Gastrocnemius medialis (tissue), 4 donors: ENCODE measurements at regions of chr2 and their contacts with region 1.

Region 1: DNA sequence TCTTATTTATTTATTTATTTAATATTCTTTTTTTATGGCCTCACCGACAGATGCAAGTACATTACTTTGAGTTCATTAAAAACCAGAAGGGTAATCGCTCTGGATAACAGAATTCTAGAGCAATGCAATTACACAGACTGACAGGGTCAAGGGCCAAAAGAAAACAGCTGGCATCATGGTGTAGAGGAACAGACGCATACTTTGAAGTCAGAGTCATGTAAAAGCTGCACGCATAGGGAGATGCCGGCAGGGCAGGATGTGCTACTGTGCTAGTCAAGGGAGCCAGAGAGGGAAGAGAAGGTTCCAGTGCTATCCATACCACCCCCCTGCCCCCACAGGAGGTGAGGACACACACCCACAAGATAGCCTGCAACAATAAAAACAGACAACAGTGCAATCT is 115.2 kb upstream of the TFCP2L1 start:
- DNase-seq: no peak
- ATAC-seq: no peak
- H3K4me3 ChIP-seq: no peak overlapping the region
- H3K27ac ChIP-seq: no peak overlapping the region
- H3K4me1 ChIP-seq: no peaks in the 10 kb centered on the region
- H3K27me3 ChIP-seq: no peaks in the 10 kb centered on the region
- CTCF ChIP-seq: no peak
- POLR2A ChIP-seq: no peak

Region 2: GRCh38 chr2:121427187-121427689 is 27.0 kb after region 1 on chr2:
- in situ Hi-C with region 1: no loop called
- intact Hi-C with region 1: no loop called
- DNase-seq: no peak
- ATAC-seq: no peak
- H3K4me3 ChIP-seq: no peak overlapping the region
- H3K27ac ChIP-seq: no peak overlapping the region
- H3K4me1 ChIP-seq: no peaks in the 10 kb centered on the region
- H3K27me3 ChIP-seq: no peaks in the 10 kb centered on the region
- CTCF ChIP-seq: no peak
- POLR2A ChIP-seq: no peak

Region 3: DNA sequence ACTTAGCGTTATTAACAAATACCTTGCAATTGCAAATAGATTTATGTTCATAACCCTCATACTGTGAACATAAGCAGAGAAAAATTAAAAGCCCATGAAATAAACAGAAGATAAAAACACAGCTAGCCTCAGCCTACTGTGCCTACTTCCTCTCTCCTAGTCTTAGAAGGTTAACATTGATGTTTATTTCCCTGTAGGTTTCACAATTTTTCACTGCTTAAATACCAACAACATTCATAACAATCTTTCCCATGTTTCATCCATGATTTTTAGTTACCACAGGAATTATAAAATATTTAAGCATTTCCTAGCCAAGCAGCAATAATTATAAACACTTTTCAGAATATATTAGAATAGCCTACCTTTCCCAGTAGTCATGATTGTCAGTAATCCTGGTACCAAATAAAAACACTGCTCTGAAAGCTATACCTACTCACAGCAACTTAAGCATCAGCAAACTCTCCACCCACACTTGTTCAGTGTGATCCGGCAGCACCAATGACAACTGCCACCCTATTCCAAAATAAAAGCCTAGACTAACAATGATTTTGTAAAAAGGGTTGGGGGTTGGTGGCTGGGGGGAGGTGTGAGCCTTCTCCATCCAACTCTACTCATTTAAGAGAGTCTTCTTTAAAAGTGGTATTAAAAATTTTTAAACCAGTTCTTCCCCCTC is 89.8 kb after region 1 on chr2:
- in situ Hi-C with region 1: no loop called
- intact Hi-C with region 1: loop called (anchors 10 kb)
- DNase-seq: no peak
- ATAC-seq: no peak
- H3K4me3 ChIP-seq: no peak overlapping the region
- H3K27ac ChIP-seq: peak overlapping the region in 2 of 4 donors; percentile 29 to 32
- H3K4me1 ChIP-seq: peaks cover 76 to 86% of the 10 kb centered on the region in 2 donors
- H3K27me3 ChIP-seq: no peaks in the 10 kb centered on the region
- CTCF ChIP-seq: no peak
- POLR2A ChIP-seq: no peak

Region 4: GRCh38 chr2:121699421-121700333 is 299.5 kb after region 1 on chr2:
- in situ Hi-C with region 1: loop called in 1 of 4 experiments (anchors 25 kb)
- intact Hi-C with region 1: no loop called
- DNase-seq: peak; percentile 70 to 94
- ATAC-seq: peak; percentile 95 to 98
- H3K4me3 ChIP-seq: no peak overlapping the region
- H3K27ac ChIP-seq: peak overlapping the region; percentile 58 to 68 (median 64)
- H3K4me1 ChIP-seq: peaks cover 6 to 13% of the 10 kb centered on the region in 2 donors
- H3K27me3 ChIP-seq: no peaks in the 10 kb centered on the region
- CTCF ChIP-seq: no peak
- POLR2A ChIP-seq: no peak

Region 5: DNA sequence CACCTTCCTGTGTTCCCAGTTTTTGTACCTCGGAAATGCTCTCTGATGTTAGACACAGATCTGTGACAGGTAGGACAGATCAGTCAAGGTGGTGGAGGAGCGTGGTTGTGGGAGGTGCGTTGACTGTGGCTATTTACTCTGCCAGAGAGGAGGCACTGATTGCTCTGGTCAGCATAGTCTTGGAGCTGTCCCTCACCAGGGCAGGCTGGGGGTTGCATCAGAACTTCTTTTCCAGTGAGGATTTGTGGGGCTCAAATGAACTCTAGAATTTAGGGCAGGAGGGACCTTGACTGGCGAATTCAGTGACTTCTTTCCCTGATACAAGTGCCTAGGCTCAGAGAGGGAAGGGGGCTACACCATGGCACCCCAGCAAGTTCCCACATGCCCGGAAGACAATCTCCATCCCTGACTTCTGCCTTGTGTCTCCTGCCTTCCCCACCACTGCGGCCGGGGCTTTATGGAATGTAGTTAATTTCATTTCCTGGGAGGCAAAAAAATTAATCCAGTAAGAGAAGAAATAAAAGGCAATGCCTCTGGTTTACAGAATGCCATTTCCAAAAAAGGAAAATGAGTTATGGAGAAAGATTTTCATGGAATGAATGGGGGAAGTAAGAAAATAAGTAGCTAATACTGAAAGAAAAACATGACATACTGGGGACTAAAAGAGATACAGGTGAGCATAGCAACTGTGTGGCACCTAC is 310.4 kb after region 1 on chr2:
- in situ Hi-C with region 1: loop called in 2 of 4 experiments (anchors 10 to 25 kb)
- intact Hi-C with region 1: no loop called
- DNase-seq: no peak
- ATAC-seq: no peak
- H3K4me3 ChIP-seq: no peak overlapping the region
- H3K27ac ChIP-seq: no peak overlapping the region
- H3K4me1 ChIP-seq: no peaks in the 10 kb centered on the region
- H3K27me3 ChIP-seq: no peaks in the 10 kb centered on the region
- CTCF ChIP-seq: no peak
- POLR2A ChIP-seq: no peak